ENCODE measurements at regions of chr2 and their contacts with region 1.

Region 1: GRCh38 chr2:69581774-69582581 is 61.6 kb downstream of the AAK1 start:
- DNase-seq: peak; percentile 51
- H3K4me3 Mint-ChIP-seq: no peak overlapping the region
- H3K27ac Mint-ChIP-seq: peak overlapping the region; percentile 25
- H3K4me1 Mint-ChIP-seq: peaks cover 38% of the 10 kb centered on the region
- H3K27me3 Mint-ChIP-seq: no peaks in the 10 kb centered on the region
- CTCF ChIP-seq: no peak

Region 2: DNA sequence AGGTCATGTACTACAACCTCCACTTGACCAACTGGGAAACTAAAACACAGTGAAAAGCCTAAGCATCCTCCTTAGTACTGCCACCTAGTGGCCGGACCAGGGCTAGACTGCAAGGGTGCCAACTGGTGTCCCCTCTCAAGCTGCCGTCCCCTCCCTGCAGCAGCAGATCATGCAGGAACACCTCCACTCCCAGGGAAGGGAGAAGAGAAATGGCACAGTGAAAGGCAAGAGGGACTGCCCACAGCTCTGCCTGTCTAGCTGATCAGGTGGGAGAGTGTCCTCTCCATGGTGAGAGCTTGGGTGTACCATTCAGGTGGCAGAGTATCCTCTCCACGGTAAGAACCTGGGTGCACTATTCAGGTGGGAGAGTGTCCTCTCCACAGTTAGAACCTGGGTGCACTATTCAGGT is 16.5 kb before region 1 on chr2:
- CTCF ChIA-PET with region 1: interaction called, 20 read pairs
- POLR2A ChIA-PET with region 1: interaction called, 19 read pairs
- intact Hi-C with region 1: no loop called
- DNase-seq: peak; percentile 53
- H3K4me3 Mint-ChIP-seq: no peak overlapping the region
- H3K27ac Mint-ChIP-seq: no peak overlapping the region
- H3K4me1 Mint-ChIP-seq: peaks cover 31% of the 10 kb centered on the region
- H3K27me3 Mint-ChIP-seq: no peaks in the 10 kb centered on the region
- CTCF ChIP-seq: peak; percentile 47

Region 3: GRCh38 chr2:69570503-69570902 is 11.5 kb before region 1 on chr2:
- CTCF ChIA-PET with region 1: interaction called, 20 read pairs
- POLR2A ChIA-PET with region 1: interaction called, 19 read pairs
- intact Hi-C with region 1: no loop called
- DNase-seq: peak; percentile 51
- H3K4me3 Mint-ChIP-seq: peak overlapping the region; percentile 6
- H3K27ac Mint-ChIP-seq: peak overlapping the region; percentile 58
- H3K4me1 Mint-ChIP-seq: peaks cover 39% of the 10 kb centered on the region
- H3K27me3 Mint-ChIP-seq: no peaks in the 10 kb centered on the region
- CTCF ChIP-seq: no peak

Region 4: DNA sequence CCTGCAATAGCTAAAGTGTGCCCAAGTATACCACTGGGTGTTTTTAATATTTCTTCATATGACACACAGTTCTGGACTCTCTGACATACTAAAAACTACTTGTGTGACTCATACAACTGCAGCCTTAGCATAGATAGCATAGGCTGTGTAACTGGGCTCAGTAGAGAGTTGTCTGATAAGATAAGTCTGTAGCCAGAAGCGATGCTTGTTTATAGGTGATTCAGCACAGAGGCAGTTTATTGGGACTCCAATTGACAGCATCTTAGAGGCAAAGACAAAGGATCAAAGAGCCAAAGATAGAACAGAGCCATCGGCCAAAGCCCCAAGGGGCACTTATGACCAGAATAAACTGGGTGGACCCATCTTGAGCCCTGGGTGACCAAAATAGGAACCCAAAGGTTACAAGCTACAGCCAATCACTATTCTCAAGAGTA is 19.2 kb after region 1 on chr2:
- CTCF ChIA-PET with region 1: interaction called, 3 read pairs
- POLR2A ChIA-PET with region 1: interaction called, 11 read pairs
- intact Hi-C with region 1: no loop called
- DNase-seq: peak; percentile 51
- H3K4me3 Mint-ChIP-seq: no peak overlapping the region
- H3K27ac Mint-ChIP-seq: no peak overlapping the region
- H3K4me1 Mint-ChIP-seq: peaks cover 12% of the 10 kb centered on the region
- H3K27me3 Mint-ChIP-seq: no peaks in the 10 kb centered on the region
- CTCF ChIP-seq: no peak